Mammary epithelial cell (primary cell): ENCODE measurements at regions of chr22 and their contacts with region 1.

Region 1: GRCh38 chr22:21771631-21771976 is 36.0 kb upstream of the YPEL1 start:
- DNase-seq: no peak
- H3K4me3 ChIP-seq: no peak overlapping the region
- H3K27ac ChIP-seq: no peak overlapping the region
- H3K4me1 ChIP-seq: no peaks in the 10 kb centered on the region
- H3K27me3 ChIP-seq: no peaks in the 10 kb centered on the region
- CTCF ChIP-seq: no peak

Region 2: DNA sequence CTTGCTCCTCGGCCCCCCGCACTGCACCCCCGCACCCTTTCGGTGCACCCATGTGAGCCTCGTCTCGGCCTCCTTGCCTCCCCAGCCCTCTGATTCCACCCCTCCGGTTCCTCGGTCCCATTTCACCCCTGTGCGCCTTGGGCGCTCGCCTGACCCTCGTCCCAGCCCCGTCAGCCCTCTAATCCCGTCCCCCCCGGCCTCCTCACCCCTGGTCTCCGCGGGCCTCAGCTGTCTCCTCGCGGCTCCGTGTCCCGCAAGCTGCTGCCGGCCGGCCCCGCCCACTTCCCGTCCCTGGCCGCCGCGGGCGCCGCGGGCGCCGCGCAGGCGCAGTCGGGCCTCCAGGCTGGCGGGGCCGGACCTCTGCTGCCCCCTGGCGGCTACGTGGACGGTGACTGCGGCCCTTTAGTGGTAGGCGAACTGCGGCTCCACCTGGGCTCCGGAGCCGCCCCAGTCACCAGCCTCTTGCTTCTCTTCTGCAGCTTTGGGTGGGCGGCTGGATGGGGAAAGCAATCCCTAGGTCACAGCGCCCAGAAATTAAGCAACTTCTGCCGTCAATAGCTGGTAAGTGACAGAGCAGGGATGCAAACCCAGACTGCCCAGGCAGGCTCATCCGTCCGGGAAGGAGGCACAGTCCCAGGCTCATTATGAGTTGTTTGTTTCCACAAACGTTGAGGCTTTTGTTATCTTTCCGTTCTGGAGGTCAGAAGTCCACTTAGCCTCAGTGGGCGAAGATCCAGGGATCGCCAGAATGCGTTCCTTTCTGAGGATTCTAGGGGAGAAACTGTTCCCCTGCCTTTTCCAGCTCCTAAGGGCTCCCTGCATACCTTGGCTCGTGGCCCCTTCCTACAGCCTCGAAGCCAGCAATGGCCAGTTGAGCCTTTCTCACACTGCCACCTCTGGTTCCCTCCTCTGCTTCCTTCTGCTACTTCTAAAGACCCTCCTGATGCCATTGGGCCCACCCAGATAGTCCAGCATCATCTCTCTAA is 181.3 kb after region 1 on chr22 and contains the start of gene PPM1F:
- CTCF ChIA-PET with region 1: no interaction called
- dilution Hi-C with region 1: no loop called
- in situ Hi-C with region 1: no loop called
- intact Hi-C with region 1: loop called (anchors 5 kb)
- DNase-seq: peak; percentile 59
- H3K4me3 ChIP-seq: peak within 1 kb of the TSS; percentile 61 to 85 (median 84)
- H3K27ac ChIP-seq: no peak within 1 kb of the TSS
- H3K4me1 ChIP-seq: peaks cover 18% of the 10 kb centered on the region
- H3K27me3 ChIP-seq: no peaks in the 10 kb centered on the region
- CTCF ChIP-seq: peak; percentile 56 to 68
- total RNA-seq, gene PPM1F: 30.8 to 43.6 TPM